ENCODE measurements at regions of chr7 and their contacts with region 1.

Region 1: GRCh38 chr7:28389504-28390395 is 22.6 kb upstream of the CREB5 start:
- DNase-seq: peak; percentile 37 to 56 (median 55)
- H3K4me3 ChIP-seq: no peak overlapping the region
- H3K4me3 Mint-ChIP-seq: no peak overlapping the region
- H3K27ac ChIP-seq: no peak overlapping the region
- H3K27ac Mint-ChIP-seq: no peak overlapping the region
- H3K4me1 ChIP-seq: no peaks in the 10 kb centered on the region
- H3K4me1 Mint-ChIP-seq: peaks cover 3% of the 10 kb centered on the region
- H3K27me3 ChIP-seq: peaks cover 12 to 17% of the 10 kb centered on the region in 2 donors
- H3K27me3 Mint-ChIP-seq: peaks cover 15 to 37% (median 17%) of the 10 kb centered on the region in 3 donors
- CTCF ChIP-seq: peak; percentile 84

Region 2: GRCh38 chr7:28626624-28627262 is 237.0 kb after region 1 on chr7:
- intact Hi-C with region 1: loop called in 1 of 2 experiments (anchors 10 kb)
- DNase-seq: peak; percentile 15 to 29 (median 21)
- H3K4me3 ChIP-seq: no peak overlapping the region
- H3K4me3 Mint-ChIP-seq: no peak overlapping the region
- H3K27ac ChIP-seq: no peak overlapping the region
- H3K27ac Mint-ChIP-seq: no peak overlapping the region
- H3K4me1 ChIP-seq: peaks cover 11% of the 10 kb centered on the region in 2 donors
- H3K4me1 Mint-ChIP-seq: peaks cover 20% of the 10 kb centered on the region
- H3K27me3 ChIP-seq: peaks cover 15 to 20% of the 10 kb centered on the region in 2 donors
- H3K27me3 Mint-ChIP-seq: peaks cover 7 to 22% (median 12%) of the 10 kb centered on the region in 3 donors
- CTCF ChIP-seq: peak; percentile 83

Region 3: GRCh38 chr7:28853834-28854749 is 464.3 kb after region 1 on chr7:
- intact Hi-C with region 1: loop called (anchors 5 kb)
- DNase-seq: peak; percentile 51 to 66 (median 58)
- H3K4me3 ChIP-seq: peak overlapping the region; percentile 20 to 81 (median 55)
- H3K4me3 Mint-ChIP-seq: peak overlapping the region; percentile 84 to 92
- H3K27ac ChIP-seq: no peak overlapping the region
- H3K27ac Mint-ChIP-seq: no peak overlapping the region
- H3K4me1 ChIP-seq: peaks cover 10 to 16% of the 10 kb centered on the region in 2 donors
- H3K4me1 Mint-ChIP-seq: peaks cover 15% of the 10 kb centered on the region
- H3K27me3 ChIP-seq: peaks cover 40 to 57% of the 10 kb centered on the region in 2 donors
- H3K27me3 Mint-ChIP-seq: peaks cover 57 to 79% (median 60%) of the 10 kb centered on the region in 3 donors
- CTCF ChIP-seq: peak; percentile 96